ENCODE measurements at regions of chr11 and their contacts with region 1.

Region 1: GRCh38 chr11:65919146-65920033 is at the start of gene DRAP1:
- DNase-seq: peak; percentile 93 to 99
- H3K4me3 ChIP-seq: peak within 1 kb of the TSS; percentile 79 to 98
- H3K27ac ChIP-seq: peak within 1 kb of the TSS; percentile 96 to 98
- H3K4me1 ChIP-seq: peaks cover 43 to 45% of the 10 kb centered on the region in 2 donors
- H3K27me3 ChIP-seq: no peaks in the 10 kb centered on the region
- CTCF ChIP-seq: peak in 1 of 3 experiments; percentile 2
- total RNA-seq, gene DRAP1: 135 TPM

Region 2: DNA sequence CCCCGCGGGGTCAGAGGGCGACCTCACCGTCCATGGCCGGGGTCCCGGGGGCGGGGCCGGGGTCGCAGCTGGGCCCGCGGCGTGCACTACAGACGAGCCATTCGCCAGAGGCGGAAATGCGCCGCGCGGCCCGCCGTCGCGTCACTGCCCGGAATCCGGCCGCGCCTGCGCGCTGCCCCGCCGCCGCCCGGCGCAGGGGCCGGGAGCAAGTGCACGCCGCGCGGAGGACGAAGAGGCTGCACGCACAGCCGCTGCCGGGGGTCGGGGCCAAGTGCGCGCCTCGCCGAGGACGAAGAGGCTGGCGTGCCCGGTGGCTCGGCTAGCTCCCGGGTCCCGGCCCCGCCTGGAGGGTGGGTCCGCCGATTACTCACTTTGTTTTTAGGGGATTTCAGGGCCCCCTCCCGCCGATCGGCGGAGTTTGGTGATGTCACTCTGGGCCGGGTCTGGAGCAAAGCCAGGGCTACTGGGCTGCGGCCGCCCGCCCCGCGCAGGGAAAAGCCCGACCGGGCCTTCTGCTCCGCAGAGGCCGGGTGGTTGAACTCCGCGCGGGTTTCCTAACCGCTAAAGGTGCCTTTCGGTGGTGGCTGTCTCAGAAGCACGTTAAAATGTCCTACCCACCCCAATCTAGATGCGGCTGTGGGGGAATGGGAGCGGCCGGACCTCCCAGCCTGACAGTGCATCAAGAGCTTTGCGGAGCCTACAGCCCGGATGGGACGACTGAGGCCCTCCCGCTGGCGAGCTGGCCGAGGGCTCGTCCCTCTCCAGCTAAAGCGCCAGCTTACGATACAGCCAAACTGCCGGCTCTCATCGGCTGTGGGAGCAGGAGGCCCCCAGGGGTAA is 256.4 kb before region 1 on chr11 and contains the start of gene RELA:
- intact Hi-C with region 1: loop called (anchors 5 kb)
- DNase-seq: peak; percentile 83 to 97
- H3K4me3 ChIP-seq: peak within 1 kb of the TSS; percentile 95 to 99
- H3K27ac ChIP-seq: peak within 1 kb of the TSS; percentile 98
- H3K4me1 ChIP-seq: peaks cover 11 to 32% of the 10 kb centered on the region in 2 donors
- H3K27me3 ChIP-seq: no peaks in the 10 kb centered on the region
- CTCF ChIP-seq: peak in 1 of 3 experiments; percentile 20
- total RNA-seq, gene RELA: 115 TPM

Region 3: DNA sequence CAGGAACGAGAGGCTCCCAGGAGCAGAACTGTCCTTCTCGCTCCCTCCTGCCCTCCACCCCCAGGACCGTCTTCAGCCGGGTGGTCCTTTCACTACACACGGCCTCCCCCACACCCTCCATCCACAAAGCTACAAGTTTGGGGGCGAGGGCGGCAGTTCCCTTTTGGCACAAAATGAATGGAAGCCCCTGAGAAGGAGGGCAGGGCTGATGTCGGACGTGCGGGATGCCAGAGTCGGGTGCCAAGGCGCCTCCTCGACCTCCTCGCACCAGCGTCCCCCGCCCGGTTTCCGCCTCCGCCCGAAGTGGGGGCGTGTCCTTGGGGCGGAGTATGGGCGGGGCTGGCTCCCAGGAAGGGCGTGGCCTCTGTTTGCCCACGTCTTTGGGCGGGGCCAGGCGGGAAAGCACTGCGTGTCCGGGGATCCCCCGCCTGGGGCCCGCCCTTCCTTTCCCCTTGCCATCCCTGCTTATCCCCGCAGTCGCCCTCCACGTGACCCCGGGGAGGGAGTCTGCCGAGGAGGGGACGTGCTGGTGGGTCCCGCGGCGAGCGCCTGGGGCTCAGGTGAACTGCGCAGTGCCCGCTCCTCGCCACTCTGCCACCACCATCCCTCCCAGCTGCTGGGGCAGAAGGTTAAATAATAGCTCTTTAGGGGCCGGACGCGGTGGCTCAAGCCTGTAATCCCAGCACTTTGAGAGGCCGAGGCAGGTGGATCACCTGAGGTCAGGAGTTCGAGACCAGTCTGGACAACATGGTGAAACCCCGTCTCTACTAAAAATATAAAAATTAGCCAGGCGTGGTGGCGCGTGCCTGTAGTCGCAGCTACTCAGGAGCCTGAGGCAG is 45.9 kb before region 1 on chr11:
- intact Hi-C with region 1: loop called (anchors 1 kb)
- DNase-seq: peak; percentile 84 to 97
- H3K4me3 ChIP-seq: peak overlapping the region; percentile 67 to 92
- H3K27ac ChIP-seq: peak overlapping the region; percentile 92 to 99
- H3K4me1 ChIP-seq: peaks cover 3 to 17% of the 10 kb centered on the region in 2 donors
- H3K27me3 ChIP-seq: no peaks in the 10 kb centered on the region
- CTCF ChIP-seq: no peak

Region 4: DNA sequence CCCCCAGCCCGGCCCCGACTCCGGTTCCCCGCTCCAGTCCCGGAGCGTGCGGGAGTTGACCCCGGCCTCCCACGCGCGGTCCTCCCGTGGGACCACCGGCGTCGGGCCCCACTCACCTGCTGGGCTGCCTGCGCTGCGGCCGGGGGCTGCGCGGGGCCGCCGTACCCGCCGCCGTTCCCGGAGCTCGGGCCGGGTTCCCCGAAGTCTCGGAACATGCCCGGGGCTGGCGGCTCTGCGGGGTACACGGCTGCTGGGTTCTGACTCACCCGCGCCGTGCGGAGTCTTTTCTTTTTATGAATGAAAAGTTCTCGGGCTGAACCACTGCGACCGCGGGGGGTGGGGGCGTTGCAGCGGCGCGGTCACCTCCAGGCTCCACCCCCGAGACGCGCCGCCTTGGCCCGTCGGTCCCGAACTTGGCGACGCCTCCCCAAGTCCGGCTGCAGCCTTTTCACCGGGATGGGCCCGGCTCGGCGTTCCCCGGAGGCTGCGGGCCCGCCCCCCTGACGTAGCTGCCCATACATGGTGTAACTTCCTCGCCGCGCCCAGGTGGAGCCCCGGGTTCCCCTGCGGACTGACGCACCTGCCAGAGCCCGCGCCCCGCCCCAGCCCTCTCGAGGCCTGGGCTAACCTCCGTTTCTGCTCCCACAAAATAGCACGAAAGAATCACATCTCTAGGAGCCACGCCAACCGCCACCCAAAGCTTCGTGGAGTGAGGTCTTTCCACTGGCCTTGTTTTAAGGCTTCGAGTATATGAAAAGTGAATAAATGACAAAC is 19.1 kb before region 1 on chr11 and contains the start of gene FOSL1:
- intact Hi-C with region 1: loop called (anchors 1 kb)
- DNase-seq: peak; percentile 80 to 96
- H3K4me3 ChIP-seq: peak within 1 kb of the TSS; percentile 70 to 80
- H3K27ac ChIP-seq: peak within 1 kb of the TSS; percentile 84 to 85
- H3K4me1 ChIP-seq: peaks cover 7 to 20% of the 10 kb centered on the region in 2 donors
- H3K27me3 ChIP-seq: no peaks in the 10 kb centered on the region
- CTCF ChIP-seq: no peak
- total RNA-seq, gene FOSL1: 123 TPM

Region 5: DNA sequence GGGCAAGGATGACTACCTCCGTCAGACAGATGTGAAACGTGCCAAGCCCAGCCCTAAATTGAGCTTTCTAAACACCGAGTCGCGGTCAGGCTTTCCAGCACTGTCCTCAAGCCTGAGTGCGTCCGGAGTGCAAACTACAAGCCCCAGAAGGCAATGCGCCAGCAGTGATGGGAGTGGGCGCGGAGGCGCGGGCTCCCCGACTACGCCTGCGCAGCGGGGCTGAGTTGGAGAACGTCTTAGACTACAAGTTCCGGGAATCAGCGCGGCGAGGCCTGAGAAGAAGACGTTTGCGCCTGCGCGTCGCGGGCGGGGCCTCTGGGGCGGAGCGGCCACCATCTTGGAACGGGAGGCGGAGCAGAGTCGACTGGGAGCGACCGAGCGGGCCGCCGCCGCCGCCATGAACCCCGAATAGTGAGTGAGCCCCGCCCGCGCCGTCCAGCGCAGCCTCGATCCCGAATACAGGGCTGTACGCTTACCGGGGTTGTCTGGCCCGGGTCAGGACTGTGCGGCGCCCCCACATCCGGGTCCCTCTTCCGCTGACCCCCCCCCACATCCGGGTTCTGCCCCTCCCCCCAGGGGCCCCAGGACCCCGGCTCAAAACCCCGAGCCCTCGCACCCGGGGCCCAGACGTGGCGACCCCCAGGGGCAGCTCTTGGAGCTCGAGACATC is 349.0 kb after region 1 on chr11 and contains the start of gene RAB1B:
- intact Hi-C with region 1: loop called (anchors 2 kb)
- DNase-seq: peak; percentile 98 to 100
- H3K4me3 ChIP-seq: peak within 1 kb of the TSS; percentile 63 to 84
- H3K27ac ChIP-seq: peak within 1 kb of the TSS; percentile 94 to 99
- H3K4me1 ChIP-seq: peaks cover 0 to 24% of the 10 kb centered on the region in 2 donors
- H3K27me3 ChIP-seq: no peaks in the 10 kb centered on the region
- CTCF ChIP-seq: no peak
- total RNA-seq, gene RAB1B: 171 TPM